Gastrocnemius medialis (tissue), 4 donors: ENCODE measurements at regions of chr4 and their contacts with region 1.

Region 1: GRCh38 chr4:77240469-77241066 is 83.6 kb downstream of the CCNG2 start:
- DNase-seq: no peak
- ATAC-seq: no peak
- H3K4me3 ChIP-seq: no peak overlapping the region
- H3K27ac ChIP-seq: no peak overlapping the region
- H3K4me1 ChIP-seq: no peaks in the 10 kb centered on the region
- H3K27me3 ChIP-seq: no peaks in the 10 kb centered on the region
- CTCF ChIP-seq: peak in 3 of 5 experiments; percentile 47 to 56 (median 51)
- POLR2A ChIP-seq: no peak

Region 2: DNA sequence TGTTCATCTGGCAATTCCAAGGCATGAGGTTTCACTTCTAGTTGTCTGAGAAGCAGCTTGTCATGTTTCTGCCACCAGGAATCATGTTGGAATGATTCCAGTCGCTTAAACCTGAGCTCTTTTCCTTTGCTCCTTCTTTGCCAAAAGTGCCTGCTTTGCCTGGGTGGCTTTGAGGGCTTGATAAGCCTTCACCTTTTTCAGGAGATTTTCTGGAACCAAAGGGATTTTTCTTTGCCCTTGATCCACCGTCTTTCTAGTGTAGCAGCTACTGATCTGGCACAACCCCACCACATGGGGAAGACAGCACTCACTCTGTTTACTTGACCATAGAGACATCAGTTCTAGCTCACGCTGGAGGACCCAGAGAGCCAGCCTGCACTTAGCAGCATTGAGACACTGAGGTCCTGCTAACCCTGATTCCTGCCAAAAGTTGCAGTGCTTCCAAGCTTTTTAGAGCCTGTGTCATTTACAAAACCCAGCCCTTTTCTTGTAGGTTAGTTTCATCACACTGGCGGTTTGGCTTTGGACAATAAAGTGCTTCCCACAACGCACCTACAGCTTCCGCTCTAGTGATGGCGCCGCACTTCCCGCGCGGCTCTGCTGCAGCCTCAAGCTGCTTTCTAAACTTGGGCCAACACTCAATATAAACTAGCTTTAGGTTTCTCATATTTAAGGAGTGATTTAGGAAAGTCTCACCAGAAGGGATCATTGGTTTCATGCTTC is 157.5 kb before region 1 on chr4:
- in situ Hi-C with region 1: no loop called
- intact Hi-C with region 1: no loop called
- DNase-seq: no peak
- ATAC-seq: no peak
- H3K4me3 ChIP-seq: no peak overlapping the region
- H3K27ac ChIP-seq: no peak overlapping the region
- H3K4me1 ChIP-seq: peaks cover 1 to 4% of the 10 kb centered on the region in 2 donors
- H3K27me3 ChIP-seq: no peaks in the 10 kb centered on the region
- CTCF ChIP-seq: no peak
- POLR2A ChIP-seq: no peak

Region 3: DNA sequence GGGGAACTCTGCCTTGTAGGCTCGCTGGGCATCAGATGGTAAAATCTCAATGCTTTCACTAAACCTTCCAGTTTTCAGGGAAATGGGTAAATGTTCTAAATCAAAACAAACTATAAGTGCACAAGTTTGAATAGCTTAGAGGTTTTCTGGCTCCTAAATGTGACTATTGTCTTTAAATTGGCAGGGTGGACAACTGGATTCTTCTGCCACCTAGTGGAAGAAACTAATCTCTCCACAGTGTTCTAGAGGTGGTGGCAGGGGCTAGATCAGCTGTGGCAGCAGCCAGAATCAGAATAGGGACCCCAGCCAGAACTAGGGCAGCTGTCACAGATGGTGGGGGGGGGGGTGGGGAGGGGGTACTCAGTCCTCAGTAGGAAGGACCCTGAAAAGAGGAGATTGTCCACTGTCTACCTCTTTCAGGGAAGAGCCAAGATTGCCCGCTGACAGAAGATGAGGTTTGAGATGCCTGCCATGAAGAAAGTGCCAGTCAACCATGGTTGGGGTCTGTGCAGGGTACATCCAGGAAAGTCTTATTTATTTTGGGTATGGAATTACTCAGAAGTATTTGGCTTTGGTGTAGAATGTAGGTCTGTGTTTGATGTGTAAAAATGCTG is 117.9 kb after region 1 on chr4:
- in situ Hi-C with region 1: no loop called
- intact Hi-C with region 1: loop called (anchors 2 kb)
- DNase-seq: no peak
- ATAC-seq: no peak
- H3K4me3 ChIP-seq: no peak overlapping the region
- H3K27ac ChIP-seq: no peak overlapping the region
- H3K4me1 ChIP-seq: no peaks in the 10 kb centered on the region
- H3K27me3 ChIP-seq: no peaks in the 10 kb centered on the region
- CTCF ChIP-seq: peak in 2 of 5 experiments; percentile 0 to 34
- POLR2A ChIP-seq: no peak